ENCODE measurements at regions of chr5 and their contacts with region 1.

Region 1: GRCh38 chr5:179166886-179167841 is 107.0 kb downstream of the ZNF354C start:
- DNase-seq: no peak
- H3K4me3 ChIP-seq: no peak overlapping the region
- H3K27me3 ChIP-seq: no peaks in the 10 kb centered on the region
- CTCF ChIP-seq: peak; percentile 51

Region 2: DNA sequence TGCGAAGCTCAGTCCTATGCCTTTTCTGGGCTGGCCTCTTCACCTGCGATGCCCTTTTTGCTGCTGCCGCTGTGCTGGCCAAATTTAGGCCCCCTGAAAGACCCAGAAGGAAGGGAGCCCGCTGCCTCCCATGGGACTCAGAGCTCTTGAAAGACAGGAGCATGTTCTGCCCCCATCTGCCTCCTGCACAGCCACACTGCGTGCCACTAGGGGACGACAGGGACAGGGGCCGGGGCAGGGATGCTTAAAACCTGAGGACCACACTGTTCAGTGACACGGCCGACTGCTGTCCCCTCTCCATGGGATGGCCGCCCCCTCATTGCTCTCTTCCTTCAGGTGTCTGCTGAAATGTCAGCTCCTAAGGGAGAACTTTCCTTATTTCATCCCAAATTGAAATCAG is 45.7 kb after region 1 on chr5:
- CTCF ChIA-PET with region 1: no interaction called
- POLR2A ChIA-PET with region 1: no interaction called
- DNase-seq: no peak
- H3K4me3 ChIP-seq: no peak overlapping the region
- H3K27me3 ChIP-seq: no peaks in the 10 kb centered on the region
- CTCF ChIP-seq: peak; percentile 70

Region 3: DNA sequence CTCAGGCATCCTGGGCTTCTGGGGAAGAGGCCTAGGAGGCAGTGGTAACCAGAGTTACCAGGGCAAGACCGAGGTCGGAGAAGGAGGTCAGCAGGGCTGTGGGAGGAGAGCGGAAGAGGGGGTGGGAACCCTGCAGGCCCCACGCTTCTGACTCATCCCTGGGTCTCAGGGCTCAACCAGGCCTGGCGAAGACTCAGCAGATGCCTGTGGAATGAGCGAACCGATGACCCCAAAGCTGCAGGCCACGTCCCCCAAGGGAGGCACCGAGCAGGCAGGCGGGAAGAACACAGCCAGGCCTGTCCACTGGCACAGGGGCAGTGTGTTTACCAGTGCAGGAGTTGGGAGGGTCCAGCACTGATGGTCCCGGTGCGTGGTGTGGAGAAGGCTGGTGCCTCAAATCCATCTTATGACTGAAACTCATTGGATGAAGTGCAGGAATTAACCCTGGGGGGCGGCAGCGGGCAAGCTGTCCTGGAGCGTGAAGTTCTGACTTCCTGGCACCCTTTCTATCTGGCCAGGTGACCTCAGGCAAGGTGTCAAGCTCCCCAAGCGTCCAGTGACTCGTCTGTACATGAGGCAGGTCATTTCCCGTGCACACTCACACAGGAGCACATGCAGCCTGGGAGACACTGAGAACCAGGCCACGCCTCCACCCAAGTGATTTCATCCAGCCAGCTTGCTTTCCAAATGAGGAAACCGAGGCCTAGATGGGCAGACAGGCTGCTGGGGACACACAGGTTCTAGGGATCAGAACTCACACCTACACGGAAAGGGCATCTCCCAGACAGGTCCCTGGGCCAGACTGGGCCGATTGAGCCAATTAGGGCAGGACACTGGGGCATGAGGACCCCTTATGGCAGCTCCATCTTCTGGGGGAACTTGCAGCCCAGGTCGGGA is 109.0 kb after region 1 on chr5:
- CTCF ChIA-PET with region 1: interaction called, 13 read pairs
- POLR2A ChIA-PET with region 1: no interaction called
- DNase-seq: peak; percentile 92
- H3K4me3 ChIP-seq: no peak overlapping the region
- H3K27me3 ChIP-seq: no peaks in the 10 kb centered on the region
- CTCF ChIP-seq: no peak

Region 4: DNA sequence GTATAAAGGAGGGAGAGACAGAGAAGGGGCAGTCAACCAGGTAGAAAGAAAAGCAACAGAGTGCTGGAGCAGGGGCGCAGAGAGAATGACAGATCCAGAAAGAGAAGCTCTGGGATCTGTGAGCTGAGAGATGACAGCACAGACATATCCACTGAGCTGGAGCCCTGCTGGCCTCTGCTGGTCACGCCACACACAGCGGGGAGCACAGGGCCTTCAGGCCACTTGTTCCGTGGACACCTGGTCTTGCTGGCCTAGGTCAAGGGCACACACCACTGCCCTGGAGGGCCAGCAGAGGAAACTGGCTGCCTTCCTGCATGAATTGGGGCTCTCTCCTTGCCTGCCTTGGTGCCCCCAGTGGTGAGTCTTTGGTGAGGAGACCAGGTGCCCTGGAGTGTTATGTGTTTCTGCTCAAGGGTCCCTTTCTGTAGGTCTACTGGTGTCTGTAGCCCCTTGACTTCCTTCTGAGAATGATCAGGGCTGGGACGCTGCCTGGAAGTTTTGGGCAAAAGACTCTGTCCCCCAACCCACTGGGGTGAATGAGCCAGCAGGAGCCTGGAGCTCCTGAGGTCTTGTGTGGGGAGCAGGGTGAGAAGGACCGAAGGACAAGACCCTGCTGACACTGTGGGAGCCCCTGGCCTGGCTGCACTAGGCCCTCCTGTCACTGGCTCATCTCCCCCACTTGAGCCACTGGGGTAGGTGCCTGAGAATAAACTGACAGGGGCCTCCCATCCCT is 237.3 kb after region 1 on chr5:
- CTCF ChIA-PET with region 1: interaction called, 20 read pairs
- POLR2A ChIA-PET with region 1: no interaction called
- DNase-seq: no peak
- H3K4me3 ChIP-seq: no peak overlapping the region
- H3K27me3 ChIP-seq: 0 out of 2 replicates have a peak, but pooled peaks cover 1% of the 10 kb centered on the region
- CTCF ChIP-seq: peak; percentile 58

Region 5: GRCh38 chr5:179495906-179496455 is 328.8 kb after region 1 on chr5:
- CTCF ChIA-PET with region 1: interaction called, 41 read pairs
- POLR2A ChIA-PET with region 1: no interaction called
- DNase-seq: no peak
- H3K4me3 ChIP-seq: no peak overlapping the region
- H3K27me3 ChIP-seq: no peaks in the 10 kb centered on the region
- CTCF ChIP-seq: no peak

Measured in BJ (cell line).